Activated CD4-positive, alpha-beta T cell treated with anti-CD3 and anti-CD28 coated beads for 36 hours (primary cell): ENCODE measurements at regions of chr3 and their contacts with region 1.

Region 1: DNA sequence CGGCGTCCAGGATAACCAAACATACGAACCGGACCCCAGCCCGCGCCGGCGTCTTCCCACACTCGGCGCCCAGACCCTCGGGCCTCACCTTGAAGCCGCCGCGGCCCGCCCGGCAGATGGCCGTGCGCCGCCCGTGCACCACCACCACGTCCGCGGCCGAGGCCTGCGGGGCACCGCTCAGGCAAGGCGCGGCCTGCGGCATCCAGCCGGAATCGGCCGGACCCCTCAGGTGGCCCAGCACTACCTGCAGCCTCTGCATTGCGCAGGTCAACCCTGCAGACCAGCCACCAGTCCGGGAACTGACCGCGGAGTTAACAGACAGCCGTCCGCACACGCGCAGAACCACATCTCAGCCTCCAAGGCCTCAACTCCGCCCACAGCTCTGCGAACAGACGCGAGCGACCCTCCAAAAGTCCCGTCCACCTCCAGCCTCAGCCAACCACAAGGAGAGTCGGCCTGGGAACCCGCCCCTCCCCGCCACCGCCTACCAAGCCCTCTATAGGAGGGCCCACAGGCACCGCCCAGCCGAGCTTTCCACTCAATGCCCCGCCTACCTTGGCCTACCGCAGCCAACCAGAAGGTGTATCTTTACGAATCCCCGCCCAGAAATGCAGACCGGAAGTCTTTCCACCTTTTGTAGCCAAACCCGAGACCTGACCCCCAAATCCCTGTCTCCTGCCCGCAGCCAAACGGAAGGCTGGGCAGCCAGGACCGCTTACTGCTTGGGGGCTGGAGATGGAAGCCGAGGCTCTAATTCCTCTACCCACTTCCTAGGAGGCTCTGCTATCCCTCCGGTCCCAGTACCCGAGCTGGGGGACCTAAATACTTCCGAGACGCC is at the start of gene ACAA1:
- DNase-seq: peak; percentile 99
- ATAC-seq: peak; percentile 95
- H3K4me3 Mint-ChIP-seq: peak within 1 kb of the TSS; percentile 97
- H3K27ac Mint-ChIP-seq: peak within 1 kb of the TSS; percentile 100
- H3K4me1 Mint-ChIP-seq: peaks cover 53% of the 10 kb centered on the region
- H3K27me3 Mint-ChIP-seq: no peaks in the 10 kb centered on the region
- total RNA-seq, gene ACAA1: 52.2 to 64.6 TPM

Region 2: GRCh38 chr3:37996785-37997301 is 140.2 kb before region 1 on chr3:
- CTCF ChIA-PET with region 1: interaction called, 3 read pairs
- POLR2A ChIA-PET with region 1: interaction called, 5 read pairs
- intact Hi-C with region 1: loop called (anchors 1 to 2 kb)
- DNase-seq: peak; percentile 92
- ATAC-seq: peak; percentile 57
- H3K4me3 Mint-ChIP-seq: no peak overlapping the region
- H3K27ac Mint-ChIP-seq: peak overlapping the region; percentile 96
- H3K4me1 Mint-ChIP-seq: peaks cover 49% of the 10 kb centered on the region
- H3K27me3 Mint-ChIP-seq: no peaks in the 10 kb centered on the region

Region 3: DNA sequence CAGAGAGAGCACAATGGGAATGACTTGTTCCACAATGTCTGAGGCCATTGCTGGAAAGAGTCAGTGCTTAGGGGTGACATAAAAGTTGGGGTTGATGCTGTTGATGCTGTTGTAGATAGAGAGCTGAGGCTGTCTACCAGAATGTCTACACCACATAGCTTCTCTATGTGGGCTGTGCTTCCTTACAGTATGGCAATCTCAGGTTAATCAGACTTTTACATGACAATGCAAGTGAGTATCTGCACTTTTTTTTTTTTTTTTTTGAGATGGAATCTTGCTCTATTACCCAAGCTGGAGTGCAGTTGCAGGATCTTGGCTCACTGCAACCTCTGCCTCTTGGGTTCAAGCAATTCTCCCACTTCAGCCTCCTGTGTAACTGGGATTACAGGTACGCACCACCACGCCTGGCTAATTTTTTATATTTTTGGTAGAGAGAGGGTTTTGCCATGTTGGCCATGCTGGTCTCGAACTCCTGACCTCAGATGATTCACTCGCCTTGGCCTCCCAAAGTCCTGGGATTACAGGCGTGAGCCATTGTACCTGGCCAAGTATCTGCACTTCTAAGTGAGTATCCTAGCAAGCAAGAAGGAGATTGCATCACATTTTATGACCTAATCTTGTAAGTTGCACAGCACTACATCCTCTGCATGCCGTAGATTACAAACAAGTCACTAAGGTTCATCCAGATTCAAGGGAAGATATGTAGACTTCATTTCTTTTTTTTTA is 69.3 kb before region 1 on chr3:
- CTCF ChIA-PET with region 1: no interaction called
- POLR2A ChIA-PET with region 1: no interaction called
- intact Hi-C with region 1: no loop called
- DNase-seq: no peak
- ATAC-seq: no peak
- H3K4me3 Mint-ChIP-seq: no peak overlapping the region
- H3K27ac Mint-ChIP-seq: no peak overlapping the region
- H3K4me1 Mint-ChIP-seq: no peaks in the 10 kb centered on the region
- H3K27me3 Mint-ChIP-seq: no peaks in the 10 kb centered on the region

Region 4: DNA sequence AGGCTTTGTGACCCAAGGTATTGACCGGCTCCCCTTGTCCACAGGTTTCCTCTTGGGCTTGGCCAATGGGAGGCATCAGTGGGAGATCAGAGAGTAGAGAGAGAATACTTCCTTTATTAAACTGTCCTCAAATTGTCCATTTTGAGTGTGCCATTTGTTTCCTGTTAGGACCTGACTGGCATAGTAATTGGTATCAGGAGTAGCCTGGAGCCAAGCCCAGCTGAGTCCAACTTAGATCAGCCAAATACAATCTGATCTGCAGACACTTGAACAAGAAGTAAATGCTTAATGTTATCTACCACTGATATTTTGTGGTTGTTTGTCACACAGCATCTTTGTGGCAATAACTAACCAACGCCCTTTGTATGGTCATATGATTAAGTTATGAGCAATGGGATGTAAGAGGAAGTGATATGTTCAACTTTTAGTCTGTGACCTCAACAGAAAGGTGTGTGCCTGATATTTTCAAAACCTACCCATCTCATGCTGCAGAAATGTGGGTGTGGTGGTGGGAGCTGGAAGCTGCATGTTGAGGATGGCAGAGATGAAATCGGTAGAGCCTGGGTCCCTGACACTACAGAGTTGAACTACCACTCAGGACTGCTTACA is 14.8 kb after region 1 on chr3:
- CTCF ChIA-PET with region 1: interaction called, 4 read pairs
- POLR2A ChIA-PET with region 1: interaction called, 3 read pairs
- intact Hi-C with region 1: loop called in 1 of 2 experiments (anchors 1 kb)
- DNase-seq: no peak
- ATAC-seq: peak; percentile 57
- H3K4me3 Mint-ChIP-seq: no peak overlapping the region
- H3K27ac Mint-ChIP-seq: no peak overlapping the region
- H3K4me1 Mint-ChIP-seq: peaks cover 36% of the 10 kb centered on the region
- H3K27me3 Mint-ChIP-seq: no peaks in the 10 kb centered on the region

Region 5: DNA sequence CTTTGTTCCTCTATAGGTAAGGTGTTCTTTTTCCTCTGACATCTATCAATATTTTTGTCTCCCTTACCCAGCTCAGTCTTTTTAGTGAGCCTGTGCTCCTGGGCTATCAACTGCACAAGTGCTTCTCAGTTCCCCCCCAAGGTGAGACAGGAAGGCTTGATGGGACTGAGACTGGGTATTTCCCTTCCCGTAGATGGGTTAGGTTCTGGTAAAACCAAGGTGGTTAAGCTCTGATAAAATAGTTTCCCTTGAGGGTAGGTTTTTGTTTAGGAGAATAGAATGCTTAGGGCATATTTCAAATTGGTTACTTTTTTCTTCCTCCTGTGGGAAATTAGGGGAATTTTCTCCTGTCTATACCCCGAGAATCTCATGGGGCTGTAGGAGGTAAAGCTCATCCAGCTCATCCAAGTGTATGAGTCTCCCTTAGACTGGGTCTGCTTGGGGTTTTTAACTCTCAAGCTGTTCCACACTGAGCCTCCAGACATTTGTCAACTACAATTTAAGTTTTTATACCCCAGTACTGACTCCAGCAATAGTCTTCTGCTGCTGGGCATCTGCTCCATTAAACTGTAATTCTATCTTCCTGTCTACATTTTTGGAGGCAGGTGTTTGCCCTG is 73.3 kb after region 1 on chr3:
- CTCF ChIA-PET with region 1: no interaction called
- POLR2A ChIA-PET with region 1: no interaction called
- intact Hi-C with region 1: loop called in 1 of 2 experiments (anchors 5 kb)
- DNase-seq: peak; percentile 14
- ATAC-seq: peak; percentile 33
- H3K4me3 Mint-ChIP-seq: no peak overlapping the region
- H3K27ac Mint-ChIP-seq: peak overlapping the region; percentile 29
- H3K4me1 Mint-ChIP-seq: peaks cover 65% of the 10 kb centered on the region
- H3K27me3 Mint-ChIP-seq: no peaks in the 10 kb centered on the region

Region 6: DNA sequence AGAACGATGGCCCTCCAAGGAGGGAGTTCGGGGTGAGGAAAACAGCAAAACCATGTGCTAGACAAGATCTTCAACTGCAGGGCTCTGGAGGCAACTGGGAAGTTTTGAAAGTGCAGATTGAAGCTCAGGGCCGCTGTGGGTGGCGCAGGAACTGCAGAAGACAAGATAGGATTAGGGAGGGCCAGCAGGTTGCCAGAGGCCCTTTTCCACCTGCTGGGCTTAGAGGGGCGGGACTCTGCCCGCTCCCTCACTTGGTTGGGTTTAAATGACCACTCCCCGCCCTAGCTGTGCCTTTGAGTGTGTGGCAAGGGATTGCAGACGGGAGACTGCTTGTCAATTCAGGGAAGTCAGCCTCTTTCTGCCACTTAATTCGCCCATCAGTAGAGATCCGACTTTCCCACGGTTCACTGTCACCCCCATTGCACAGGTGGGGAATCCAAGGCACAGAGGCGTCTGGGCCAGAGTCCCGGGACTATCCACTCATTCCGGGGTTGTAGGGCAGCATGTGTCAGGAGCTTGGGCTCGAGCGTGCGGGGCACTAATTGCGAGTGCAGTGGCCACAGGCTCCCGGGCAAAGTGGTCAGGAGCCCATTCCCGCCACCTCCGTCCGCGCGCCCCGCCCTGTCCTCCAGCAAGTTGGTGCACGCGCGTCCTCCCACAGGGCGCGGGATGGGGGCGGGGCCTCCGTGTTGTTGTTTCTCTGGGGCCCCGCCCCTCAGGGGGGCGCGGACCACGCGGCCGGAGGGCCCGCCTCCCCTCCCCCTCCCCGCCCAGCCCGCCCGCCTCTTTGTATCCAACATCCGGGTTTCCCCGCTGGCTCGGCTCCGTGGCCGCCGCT is 316.3 kb after region 1 on chr3 and contains the start of gene ACVR2B:
- CTCF ChIA-PET with region 1: no interaction called
- POLR2A ChIA-PET with region 1: no interaction called
- intact Hi-C with region 1: loop called (anchors 1 to 10 kb)
- DNase-seq: peak; percentile 85
- ATAC-seq: peak; percentile 71
- H3K4me3 Mint-ChIP-seq: peak within 1 kb of the TSS; percentile 87
- H3K27ac Mint-ChIP-seq: peak within 1 kb of the TSS; percentile 81
- H3K4me1 Mint-ChIP-seq: peaks cover 9% of the 10 kb centered on the region
- H3K27me3 Mint-ChIP-seq: peaks cover 2% of the 10 kb centered on the region
- total RNA-seq, gene ACVR2B: 5.7 to 6.9 TPM

Region 7: GRCh38 chr3:38496131-38496910 is 359.3 kb after region 1 on chr3 and contains the start of gene EXOG:
- CTCF ChIA-PET with region 1: no interaction called
- POLR2A ChIA-PET with region 1: no interaction called
- intact Hi-C with region 1: loop called in 1 of 2 experiments (anchors 1 kb)
- DNase-seq: peak; percentile 98
- ATAC-seq: peak; percentile 88
- H3K4me3 Mint-ChIP-seq: peak within 1 kb of the TSS; percentile 86
- H3K27ac Mint-ChIP-seq: peak within 1 kb of the TSS; percentile 92
- H3K4me1 Mint-ChIP-seq: peaks cover 18% of the 10 kb centered on the region
- H3K27me3 Mint-ChIP-seq: no peaks in the 10 kb centered on the region
- total RNA-seq, gene EXOG: 13.0 to 14.9 TPM